ENCODE measurements at regions of chr2 and their contacts with region 1.

Region 1: GRCh38 chr2:203814661-203815540 is 52.7 kb upstream of the CTLA4 start:
- DNase-seq: no peak
- H3K4me3 ChIP-seq: no peak overlapping the region
- CTCF ChIP-seq: peak; percentile 60

Region 2: GRCh38 chr2:203225423-203226039 is 589.4 kb before region 1 on chr2:
- CTCF ChIA-PET with region 1: interaction called, 18 read pairs
- POLR2A ChIA-PET with region 1: no interaction called
- DNase-seq: no peak
- H3K4me3 ChIP-seq: no peak overlapping the region
- CTCF ChIP-seq: peak; percentile 64

Region 3: GRCh38 chr2:203453858-203454451 is 360.9 kb before region 1 on chr2:
- CTCF ChIA-PET with region 1: interaction called, 11 read pairs
- POLR2A ChIA-PET with region 1: no interaction called
- DNase-seq: no peak
- H3K4me3 ChIP-seq: no peak overlapping the region
- CTCF ChIP-seq: peak; percentile 62

Region 4: DNA sequence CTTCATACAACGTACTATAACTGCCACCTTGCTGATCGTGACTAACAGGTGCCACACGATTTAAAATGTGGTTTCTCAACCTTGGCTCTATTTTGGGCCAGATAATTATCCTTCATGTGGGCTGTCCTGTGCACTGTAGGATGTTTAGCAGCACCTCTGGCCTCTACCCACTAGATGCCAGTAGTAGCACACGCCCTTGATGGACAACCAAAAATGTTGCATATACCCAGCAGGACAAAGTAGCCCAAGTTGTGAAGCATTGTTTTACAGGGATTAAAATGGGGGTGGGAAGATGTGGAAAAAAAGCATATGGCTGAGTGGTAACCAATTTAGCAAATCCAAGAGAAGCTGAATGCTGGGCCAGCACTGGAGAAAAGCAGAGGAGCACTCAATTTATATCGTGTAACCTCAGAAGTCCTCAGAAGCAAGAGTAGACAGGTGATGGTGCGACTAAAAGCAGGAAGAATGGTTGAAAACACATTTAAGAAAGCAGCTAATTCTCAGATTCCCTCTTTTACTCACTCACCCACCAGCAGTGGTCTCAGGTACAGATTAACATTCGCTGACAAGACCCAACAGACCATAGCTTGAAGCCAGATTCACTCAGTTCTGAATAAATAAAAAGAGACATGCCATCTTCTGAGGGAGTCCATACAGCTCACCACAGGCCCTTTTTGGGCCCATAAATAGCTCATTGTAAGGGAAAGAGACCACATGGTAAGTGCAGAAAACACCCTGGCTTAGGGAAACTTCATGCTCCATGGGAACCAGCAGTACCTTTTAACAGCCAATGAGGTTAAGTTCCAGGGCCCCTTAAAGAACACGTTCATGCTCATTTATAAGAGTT is 330.4 kb before region 1 on chr2:
- CTCF ChIA-PET with region 1: interaction called, 11 read pairs
- POLR2A ChIA-PET with region 1: no interaction called
- DNase-seq: no peak
- H3K4me3 ChIP-seq: no peak overlapping the region
- CTCF ChIP-seq: peak; percentile 51

Region 5: DNA sequence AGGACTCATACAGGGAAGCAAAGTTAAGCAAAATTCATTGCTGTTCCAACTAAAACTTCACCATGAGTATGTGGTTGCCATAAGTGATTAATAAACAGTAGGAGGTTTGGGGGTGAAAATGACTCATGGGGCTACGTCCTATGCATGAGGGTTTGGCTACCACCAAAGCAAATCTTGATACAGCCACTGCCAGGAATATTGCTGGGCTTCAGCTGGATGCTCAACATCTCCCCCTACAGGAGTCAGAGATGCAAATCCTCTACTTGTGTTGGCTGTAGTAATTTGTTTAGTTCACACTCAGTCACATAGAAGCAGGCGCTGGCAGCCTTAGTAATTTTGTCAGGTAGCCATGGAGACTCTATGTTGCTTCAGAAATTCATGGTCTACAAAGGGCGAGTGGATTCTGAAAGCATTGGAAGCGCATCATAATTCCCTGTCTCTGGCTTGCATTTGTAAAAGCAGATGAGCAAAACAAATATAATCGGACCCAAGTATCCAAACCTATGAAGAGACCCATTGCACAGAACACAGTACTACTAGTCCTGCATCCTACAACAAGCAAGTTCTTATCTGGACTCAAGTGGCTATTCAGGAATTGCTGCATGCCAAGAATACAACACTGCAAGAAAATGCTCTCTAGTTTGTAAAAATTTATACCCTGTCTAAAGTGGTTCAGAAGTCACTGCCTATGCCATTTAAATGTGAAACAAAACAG is 32.5 kb before region 1 on chr2:
- CTCF ChIA-PET with region 1: interaction called, 16 read pairs
- POLR2A ChIA-PET with region 1: interaction called, 20 read pairs
- DNase-seq: peak; percentile 92
- H3K4me3 ChIP-seq: no peak overlapping the region
- CTCF ChIP-seq: peak; percentile 82

Region 6: DNA sequence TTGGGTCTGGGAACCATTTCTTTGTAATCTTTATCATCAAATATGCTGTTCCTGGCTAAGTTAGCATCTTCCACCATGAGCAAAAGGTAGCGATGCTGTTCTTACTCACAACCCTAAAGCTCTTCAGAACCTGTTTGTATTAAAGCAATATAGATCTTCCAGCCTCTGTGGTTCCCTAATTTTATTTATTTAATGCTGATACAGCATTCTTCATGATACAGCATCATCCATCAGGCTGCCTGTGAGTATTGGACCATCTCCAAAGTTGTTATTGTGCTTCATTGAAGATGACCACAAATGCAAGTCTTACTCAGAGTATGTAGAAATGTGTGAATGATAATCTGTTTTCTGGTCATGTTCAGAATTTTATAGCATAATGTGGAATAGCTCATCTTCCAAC is 11.8 kb after region 1 on chr2:
- CTCF ChIA-PET with region 1: interaction called, 15 read pairs
- POLR2A ChIA-PET with region 1: no interaction called
- DNase-seq: no peak
- H3K4me3 ChIP-seq: no peak overlapping the region
- CTCF ChIP-seq: no peak